Activated CD4-positive, alpha-beta memory T cell treated with anti-CD3 and anti-CD28 coated beads for 36 hours (primary cell): ENCODE measurements at regions of chr1 and their contacts with region 1.

Region 1: GRCh38 chr1:150813058-150813707 is 5.1 kb upstream of the CTSK start:
- DNase-seq: peak; percentile 38
- H3K4me3 Mint-ChIP-seq: no peak overlapping the region
- H3K27ac Mint-ChIP-seq: no peak overlapping the region
- H3K4me1 Mint-ChIP-seq: no peaks in the 10 kb centered on the region
- H3K27me3 Mint-ChIP-seq: no peaks in the 10 kb centered on the region

Region 2: DNA sequence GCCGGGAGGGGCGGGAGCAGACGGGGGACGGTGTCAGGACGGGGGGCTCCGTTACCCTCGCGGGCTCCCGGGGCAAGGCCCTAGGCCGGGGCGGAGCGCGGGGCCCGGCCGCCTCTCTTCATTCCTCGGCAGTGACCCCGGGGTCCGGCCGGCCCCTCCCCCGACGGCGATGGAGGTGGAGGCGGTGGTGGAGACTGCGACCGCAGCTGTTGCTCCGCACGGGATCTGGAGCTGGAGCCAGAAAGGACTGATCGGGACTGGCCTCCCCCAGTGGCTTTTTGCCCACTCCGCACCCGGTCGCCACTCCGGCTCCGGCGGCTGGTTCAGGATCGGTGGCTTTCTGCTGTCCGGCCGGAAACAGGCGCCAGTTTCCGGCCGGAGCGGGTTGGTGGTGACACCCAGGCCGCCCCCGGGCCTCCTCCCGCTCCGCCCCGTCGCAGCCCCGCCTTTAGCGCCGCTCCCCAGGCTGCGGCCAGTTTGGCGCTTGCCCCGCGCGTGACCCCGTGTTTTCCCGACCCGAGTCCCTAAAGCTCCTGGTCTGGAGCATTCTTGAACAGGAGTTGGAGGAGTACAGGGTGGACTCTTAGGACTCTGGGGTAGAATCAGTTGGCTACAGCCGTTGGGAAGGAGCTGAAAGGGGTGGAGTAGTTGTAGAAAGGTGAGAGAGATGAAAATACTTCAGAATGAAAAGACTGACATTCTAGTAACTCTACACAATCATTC is 802.6 kb before region 1 on chr1 and contains the start of gene OTUD7B:
- CTCF ChIA-PET with region 1: no interaction called
- POLR2A ChIA-PET with region 1: no interaction called
- intact Hi-C with region 1: no loop called
- DNase-seq: peak; percentile 87
- H3K4me3 Mint-ChIP-seq: peak within 1 kb of the TSS; percentile 99
- H3K27ac Mint-ChIP-seq: peak within 1 kb of the TSS; percentile 98
- H3K4me1 Mint-ChIP-seq: peaks cover 39% of the 10 kb centered on the region
- H3K27me3 Mint-ChIP-seq: no peaks in the 10 kb centered on the region
- total RNA-seq, gene OTUD7B: 23.8 to 24.7 TPM

Region 3: GRCh38 chr1:150753416-150753815 is 59.8 kb before region 1 on chr1:
- CTCF ChIA-PET with region 1: no interaction called
- POLR2A ChIA-PET with region 1: no interaction called
- intact Hi-C with region 1: loop called (anchors 10 kb)
- DNase-seq: no peak
- H3K4me3 Mint-ChIP-seq: no peak overlapping the region
- H3K27ac Mint-ChIP-seq: no peak overlapping the region
- H3K4me1 Mint-ChIP-seq: no peaks in the 10 kb centered on the region
- H3K27me3 Mint-ChIP-seq: no peaks in the 10 kb centered on the region

Region 4: DNA sequence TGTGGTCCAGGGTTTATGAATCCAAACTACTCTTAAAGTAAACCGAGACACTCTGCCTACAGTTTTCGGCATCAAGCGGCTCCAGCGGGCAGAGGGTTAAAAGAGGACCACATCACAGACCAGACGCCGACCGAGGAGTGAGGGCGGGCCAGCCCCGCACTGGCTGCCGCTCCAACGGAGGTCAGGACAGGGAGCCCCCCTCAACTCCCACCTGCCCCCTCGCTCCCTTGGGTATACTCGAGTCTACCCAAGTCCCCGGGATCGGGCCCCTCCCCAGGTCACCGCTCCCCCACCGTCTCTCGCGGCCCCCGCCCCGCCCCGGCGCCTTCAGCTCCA is 62.9 kb after region 1 on chr1:
- CTCF ChIA-PET with region 1: no interaction called
- POLR2A ChIA-PET with region 1: no interaction called
- intact Hi-C with region 1: no loop called
- DNase-seq: no peak
- H3K4me3 Mint-ChIP-seq: peak overlapping the region; percentile 84
- H3K27ac Mint-ChIP-seq: peak overlapping the region; percentile 85
- H3K4me1 Mint-ChIP-seq: peaks cover 30% of the 10 kb centered on the region
- H3K27me3 Mint-ChIP-seq: no peaks in the 10 kb centered on the region

Region 5: GRCh38 chr1:150961799-150962198 is 148.6 kb after region 1 on chr1:
- CTCF ChIA-PET with region 1: no interaction called
- POLR2A ChIA-PET with region 1: no interaction called
- intact Hi-C with region 1: no loop called
- DNase-seq: no peak
- H3K4me3 Mint-ChIP-seq: no peak overlapping the region
- H3K27ac Mint-ChIP-seq: peak overlapping the region; percentile 79
- H3K4me1 Mint-ChIP-seq: peaks cover 19% of the 10 kb centered on the region
- H3K27me3 Mint-ChIP-seq: no peaks in the 10 kb centered on the region